ENCODE measurements at regions of chr7 and their contacts with region 1.

Region 1: GRCh38 chr7:74289018-74289658 is at the start of gene CLIP2:
- DNase-seq: peak; percentile 58
- H3K4me3 Mint-ChIP-seq: peak within 1 kb of the TSS; percentile 81
- H3K27ac Mint-ChIP-seq: no peak within 1 kb of the TSS
- H3K4me1 Mint-ChIP-seq: peaks cover 15% of the 10 kb centered on the region
- H3K27me3 Mint-ChIP-seq: peaks cover 37% of the 10 kb centered on the region
- total RNA-seq, gene CLIP2: 2.1 and 2.7 TPM in 2 replicates

Region 2: GRCh38 chr7:74269757-74270277 is 19.3 kb before region 1 on chr7:
- intact Hi-C with region 1: loop called (anchors 1 kb)
- DNase-seq: peak; percentile 46
- H3K4me3 Mint-ChIP-seq: peak overlapping the region; percentile 75
- H3K27ac Mint-ChIP-seq: no peak overlapping the region
- H3K4me1 Mint-ChIP-seq: peaks cover 7% of the 10 kb centered on the region
- H3K27me3 Mint-ChIP-seq: peaks cover 9% of the 10 kb centered on the region

Region 3: DNA sequence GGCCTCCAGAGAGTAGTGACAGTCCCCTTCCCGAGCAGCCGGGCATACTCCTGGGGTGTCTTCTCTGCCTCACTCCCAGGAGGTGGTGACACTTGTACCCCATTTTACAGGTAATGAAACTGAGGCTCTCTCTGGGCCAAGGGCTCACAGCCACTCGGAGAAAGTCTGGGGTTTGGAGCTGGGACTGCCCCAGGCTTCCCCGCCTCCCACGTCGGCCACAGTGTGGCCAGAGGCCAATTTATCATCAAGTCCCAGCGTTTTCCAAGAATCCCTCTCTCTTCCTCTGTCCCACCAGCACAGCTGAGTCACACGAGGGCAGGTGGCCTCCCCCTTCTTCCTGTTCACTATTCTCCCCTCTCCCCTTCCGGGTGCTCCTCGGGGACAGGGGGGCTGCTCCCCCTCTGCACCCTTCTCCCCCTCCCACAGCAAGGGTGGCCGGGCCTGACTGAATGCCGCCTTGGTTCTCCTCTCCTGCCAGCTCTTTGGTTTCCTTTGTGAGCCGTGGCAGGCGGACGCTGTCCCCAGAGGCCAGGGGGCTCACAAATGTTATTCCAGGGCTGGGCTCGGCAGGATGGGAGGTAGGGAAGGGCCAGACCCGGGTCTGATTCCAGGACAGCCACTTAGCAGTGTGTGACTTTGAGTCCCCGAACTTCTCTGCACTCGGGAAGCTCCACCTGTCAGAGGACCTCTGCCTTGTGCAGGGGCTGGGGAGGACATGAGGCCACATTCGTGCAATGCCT is 17.8 kb after region 1 on chr7:
- intact Hi-C with region 1: no loop called
- DNase-seq: no peak
- H3K4me3 Mint-ChIP-seq: peak overlapping the region; percentile 5
- H3K27ac Mint-ChIP-seq: no peak overlapping the region
- H3K4me1 Mint-ChIP-seq: peaks cover 16% of the 10 kb centered on the region
- H3K27me3 Mint-ChIP-seq: peaks cover 4% of the 10 kb centered on the region

Measured in activated T-helper 2 cell treated with anti-CD3 and anti-CD28 coated beads, Interferon-gamma antibody, Interleukin-2, Interleukin-4, amounts not matched to agents 10 μg/mL and 5 μg/mL and 100 μg/mL, durations not matched to agents 14 hours and 24 hours and 36 hours (primary cell).